HCT116 (cell line): ENCODE measurements at regions of chr12 and their contacts with region 1.

Region 1: DNA sequence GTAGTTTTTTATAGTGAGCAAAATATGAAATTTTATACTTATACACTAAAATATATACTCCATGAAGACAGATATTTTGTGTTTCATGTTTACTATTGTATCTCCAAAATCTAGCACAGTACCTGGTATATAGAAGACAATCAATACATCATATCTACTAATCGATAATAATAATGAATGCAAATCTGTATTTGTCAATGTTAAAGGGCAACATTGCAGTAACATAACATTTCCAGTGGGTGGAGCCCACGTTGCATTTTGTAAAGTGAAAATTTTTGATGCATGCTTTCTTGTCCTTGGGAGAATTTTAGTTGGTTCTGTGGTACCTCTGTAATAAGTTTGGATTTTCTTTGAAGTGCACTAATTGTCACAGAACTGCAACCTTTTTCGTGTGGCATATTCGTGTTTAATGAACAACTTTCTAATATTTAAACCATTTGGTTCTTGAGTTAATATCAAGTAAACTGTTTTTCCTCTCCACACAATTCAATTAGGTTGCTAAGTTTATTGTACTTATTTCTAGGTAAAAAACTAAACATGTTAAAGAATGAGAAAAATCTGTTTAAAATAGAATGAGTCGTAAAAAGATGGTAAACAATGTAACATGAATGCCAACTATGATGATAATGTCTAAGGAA is 47.4 kb downstream of the AVPR1A start:
- DNase-seq: peak; percentile 16
- ATAC-seq: no peak
- H3K4me3 ChIP-seq: no peak overlapping the region
- H3K27ac ChIP-seq: no peak overlapping the region
- H3K4me1 ChIP-seq: no peaks in the 10 kb centered on the region
- H3K27me3 ChIP-seq: no peaks in the 10 kb centered on the region
- CTCF ChIP-seq: peak; percentile 59 to 87 (median 63); a peak in 5 of 6 replicates
- POLR2A ChIP-seq: no peak
- RAD21 ChIP-seq: peak; percentile 82

Region 2: GRCh38 chr12:62543753-62544152 is 559.9 kb before region 1 on chr12:
- CTCF ChIA-PET with region 1: no interaction called
- POLR2A ChIA-PET with region 1: no interaction called
- RAD21 ChIA-PET with region 1: no interaction called
- intact Hi-C with region 1: no loop called
- DNase-seq: no peak
- ATAC-seq: no peak
- H3K4me3 ChIP-seq: no peak overlapping the region
- H3K27ac ChIP-seq: no peak overlapping the region
- H3K4me1 ChIP-seq: no peaks in the 10 kb centered on the region
- H3K27me3 ChIP-seq: no peaks in the 10 kb centered on the region
- CTCF ChIP-seq: no peak
- POLR2A ChIP-seq: no peak
- RAD21 ChIP-seq: no peak

Region 3: DNA sequence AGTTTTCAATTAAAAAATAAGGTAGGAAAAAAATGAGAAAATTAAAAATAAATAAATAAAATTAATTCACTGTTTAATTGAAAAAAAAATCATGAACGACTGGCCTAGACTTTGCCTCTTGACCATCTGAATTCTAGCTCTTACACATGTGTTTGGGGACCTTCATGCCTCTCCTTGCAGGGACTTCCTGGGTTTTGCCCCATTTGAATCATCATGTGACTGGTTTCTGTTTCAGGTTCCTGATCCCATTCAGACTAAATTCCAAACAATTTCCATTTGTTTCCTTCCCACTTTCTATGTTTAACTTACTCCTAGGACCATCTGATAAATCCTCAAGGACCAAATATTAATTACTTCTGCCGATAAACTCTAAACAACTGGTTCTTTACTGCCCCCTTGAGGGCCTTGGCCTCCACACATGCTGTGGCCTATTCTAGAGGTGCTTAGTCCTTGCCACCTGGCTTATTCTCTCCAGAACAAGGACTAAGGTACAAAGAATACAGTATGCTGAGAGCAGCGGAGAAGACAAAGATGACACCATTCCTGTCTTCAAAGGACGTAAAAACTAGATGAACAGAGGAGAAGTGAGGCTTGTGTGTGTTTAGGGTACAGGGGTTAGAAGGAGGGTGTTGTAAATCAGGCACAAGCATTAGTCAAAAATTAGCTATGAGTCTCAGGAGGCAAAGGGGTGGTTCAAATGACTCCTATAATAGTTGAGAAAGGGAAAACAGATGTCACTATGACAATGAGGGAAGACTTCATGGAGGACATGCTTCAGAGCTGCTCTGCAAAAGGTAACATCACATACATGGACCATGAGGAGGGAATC is 173.1 kb after region 1 on chr12:
- CTCF ChIA-PET with region 1: interaction called, 3 read pairs
- POLR2A ChIA-PET with region 1: no interaction called
- RAD21 ChIA-PET with region 1: no interaction called
- intact Hi-C with region 1: loop called (anchors 1 kb)
- DNase-seq: peak; percentile 61
- ATAC-seq: peak; percentile 98
- H3K4me3 ChIP-seq: no peak overlapping the region
- H3K27ac ChIP-seq: no peak overlapping the region
- H3K4me1 ChIP-seq: no peaks in the 10 kb centered on the region
- H3K27me3 ChIP-seq: no peaks in the 10 kb centered on the region
- CTCF ChIP-seq: peak; percentile 60 to 91 (median 90); a peak in 5 of 6 replicates
- POLR2A ChIP-seq: no peak
- RAD21 ChIP-seq: peak; percentile 74

Region 4: GRCh38 chr12:63766498-63766897 is 662.9 kb after region 1 on chr12:
- CTCF ChIA-PET with region 1: no interaction called
- POLR2A ChIA-PET with region 1: no interaction called
- RAD21 ChIA-PET with region 1: no interaction called
- intact Hi-C with region 1: loop called (anchors 10 kb)
- DNase-seq: no peak
- ATAC-seq: no peak
- H3K4me3 ChIP-seq: no peak overlapping the region
- H3K27ac ChIP-seq: no peak overlapping the region
- H3K4me1 ChIP-seq: no peaks in the 10 kb centered on the region
- H3K27me3 ChIP-seq: no peaks in the 10 kb centered on the region
- CTCF ChIP-seq: peak; percentile 9 to 38 (median 26); a peak in 3 of 6 replicates
- POLR2A ChIP-seq: no peak
- RAD21 ChIP-seq: peak; percentile 48

Region 5: GRCh38 chr12:63802012-63802608 is 698.5 kb after region 1 on chr12:
- CTCF ChIA-PET with region 1: no interaction called
- POLR2A ChIA-PET with region 1: no interaction called
- RAD21 ChIA-PET with region 1: no interaction called
- intact Hi-C with region 1: loop called (anchors 1 kb)
- DNase-seq: no peak
- ATAC-seq: no peak
- H3K4me3 ChIP-seq: no peak overlapping the region
- H3K27ac ChIP-seq: no peak overlapping the region
- H3K4me1 ChIP-seq: no peaks in the 10 kb centered on the region
- H3K27me3 ChIP-seq: no peaks in the 10 kb centered on the region
- CTCF ChIP-seq: peak; percentile 48 to 63 (median 57); a peak in 5 of 6 replicates
- POLR2A ChIP-seq: no peak
- RAD21 ChIP-seq: peak; percentile 79

Region 6: DNA sequence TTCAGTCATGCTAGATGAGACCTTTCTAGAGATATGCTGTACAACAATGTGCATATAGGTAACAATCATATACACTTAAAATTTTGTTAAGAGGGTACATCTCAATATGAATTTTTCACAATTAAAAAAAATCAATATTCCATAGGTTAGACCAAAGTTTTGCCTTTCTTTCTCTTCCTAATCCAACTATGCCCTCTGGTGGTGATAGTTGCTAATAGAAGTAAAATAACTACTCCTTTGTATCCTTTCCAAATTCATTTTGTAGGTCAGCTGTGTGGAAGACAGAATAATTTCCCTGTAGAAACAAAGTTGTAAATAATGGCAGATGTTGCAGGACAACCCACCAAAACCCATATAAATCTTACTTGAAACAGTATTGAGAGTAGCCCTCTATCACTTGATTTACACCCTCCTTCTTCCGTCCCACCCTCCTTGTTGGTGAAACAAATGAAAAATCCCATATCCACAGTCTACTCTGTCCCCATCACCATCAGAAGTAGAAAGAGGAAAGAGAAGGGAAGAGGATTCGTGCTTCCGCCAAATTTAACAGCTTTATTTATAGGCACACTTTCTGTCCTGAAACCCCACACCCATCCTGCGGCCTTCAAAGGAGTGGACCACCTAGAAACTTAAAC is 1152.7 kb after region 1 on chr12:
- CTCF ChIA-PET with region 1: no interaction called
- POLR2A ChIA-PET with region 1: no interaction called
- RAD21 ChIA-PET with region 1: no interaction called
- intact Hi-C with region 1: loop called (anchors 5 kb)
- DNase-seq: peak; percentile 33
- ATAC-seq: peak; percentile 47; the same call in 1 of the 2 replicates
- H3K4me3 ChIP-seq: no peak overlapping the region
- H3K27ac ChIP-seq: no peak overlapping the region
- H3K4me1 ChIP-seq: no peaks in the 10 kb centered on the region
- H3K27me3 ChIP-seq: no peaks in the 10 kb centered on the region
- CTCF ChIP-seq: peak; percentile 42 to 94 (median 84); a peak in 5 of 6 replicates
- POLR2A ChIP-seq: no peak
- RAD21 ChIP-seq: peak; percentile 97